Heart right ventricle (tissue), 16 donors: ENCODE measurements at regions of chr1 and their contacts with region 1.

Region 1: DNA sequence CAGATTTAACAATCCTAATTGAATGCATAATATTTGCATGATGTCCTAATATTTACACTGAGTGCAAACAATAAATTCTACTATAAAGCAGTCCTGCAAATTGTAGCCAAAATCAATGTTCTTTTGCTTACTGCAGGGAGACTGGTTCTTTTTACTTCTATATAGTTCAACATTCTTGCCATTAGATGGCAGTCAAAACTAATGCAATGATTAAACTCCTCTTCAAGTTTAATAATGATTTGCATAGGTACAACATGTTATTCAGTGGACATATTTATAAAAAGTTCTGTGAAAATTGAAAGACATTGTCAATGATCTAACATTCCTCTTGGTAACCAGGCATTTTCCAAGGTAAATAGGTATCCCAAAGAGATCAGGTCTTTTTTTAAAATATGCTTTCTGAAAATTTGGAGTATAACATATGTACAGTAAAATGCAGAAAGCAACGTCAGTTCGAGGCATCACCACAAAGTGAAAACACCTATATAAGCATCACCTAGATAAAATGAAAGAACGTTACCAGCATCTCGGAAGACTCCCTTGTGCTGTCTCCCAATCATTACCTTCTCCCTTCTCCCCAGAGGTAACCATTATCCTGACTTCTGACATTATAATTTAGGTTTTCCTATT is 9.8 kb upstream of the FNBP1L start:
- DNase-seq: no peak
- ATAC-seq: peak in 5 of 8 donors; percentile 61 to 79 (median 68)
- H3K4me3 ChIP-seq: no peak overlapping the region
- H3K27ac ChIP-seq: no peak overlapping the region
- H3K4me1 ChIP-seq: peaks cover 0 to 3% (median 0%) of the 10 kb centered on the region in 9 donors
- H3K27me3 ChIP-seq: peaks cover 0 to 6% (median 0%) of the 10 kb centered on the region in 7 donors
- CTCF ChIP-seq: peak; percentile 37 to 83 (median 71)

Region 2: GRCh38 chr1:93304716-93305138 is 133.4 kb before region 1 on chr1:
- intact Hi-C with region 1: loop called in 5 of 10 experiments (anchors 10 kb)
- DNase-seq: peak in 1 of 2 donors; percentile 54
- ATAC-seq: peak in 5 of 8 donors; percentile 31 to 65 (median 52)
- H3K4me3 ChIP-seq: no peak overlapping the region
- H3K27ac ChIP-seq: no peak overlapping the region
- H3K4me1 ChIP-seq: peaks cover 0 to 5% (median 0%) of the 10 kb centered on the region in 9 donors
- H3K27me3 ChIP-seq: no peaks in the 10 kb centered on the region
- CTCF ChIP-seq: peak; percentile 84 to 96 (median 89)

Region 3: GRCh38 chr1:93615582-93616150 is 177.6 kb after region 1 on chr1:
- intact Hi-C with region 1: loop called in 2 of 10 experiments (anchors 5 to 10 kb)
- DNase-seq: no peak
- ATAC-seq: no peak
- H3K4me3 ChIP-seq: no peak overlapping the region
- H3K27ac ChIP-seq: peak overlapping the region in 8 of 10 donors; percentile 55 to 82 (median 74)
- H3K4me1 ChIP-seq: peaks cover 24 to 98% (median 65%) of the 10 kb centered on the region in 9 donors
- H3K27me3 ChIP-seq: no peaks in the 10 kb centered on the region
- CTCF ChIP-seq: no peak

Region 4: GRCh38 chr1:93814059-93814794 is 376.1 kb after region 1 on chr1:
- intact Hi-C with region 1: loop called in 7 of 10 experiments (anchors 2 to 10 kb)
- DNase-seq: peak in 1 of 2 donors; percentile 75
- ATAC-seq: peak; percentile 69 to 87 (median 78)
- H3K4me3 ChIP-seq: no peak overlapping the region
- H3K27ac ChIP-seq: no peak overlapping the region
- H3K4me1 ChIP-seq: peaks cover 2 to 57% (median 45%) of the 10 kb centered on the region in 9 donors
- H3K27me3 ChIP-seq: no peaks in the 10 kb centered on the region
- CTCF ChIP-seq: peak; percentile 96 to 100 (median 98)

Region 5: GRCh38 chr1:93846211-93846991 is 408.3 kb after region 1 on chr1:
- intact Hi-C with region 1: loop called in 9 of 10 experiments (anchors 2 to 10 kb)
- DNase-seq: peak; percentile 89
- ATAC-seq: peak; percentile 64 to 81 (median 76)
- H3K4me3 ChIP-seq: peak overlapping the region; percentile 69 to 93 (median 86)
- H3K27ac ChIP-seq: peak overlapping the region; percentile 86 to 98 (median 96)
- H3K4me1 ChIP-seq: peaks cover 4 to 38% (median 31%) of the 10 kb centered on the region in 9 donors
- H3K27me3 ChIP-seq: no peaks in the 10 kb centered on the region
- CTCF ChIP-seq: peak in 7 of 9 donors; percentile 17 to 57 (median 40)